Activated CD4-positive, alpha-beta memory T cell treated with anti-CD3 and anti-CD28 coated beads, Interleukin-2, amount 10 ng/mL, durations not matched to agents 7 days and 5 days (primary cell): ENCODE measurements at regions of chr5 and their contacts with region 1.

Region 1: DNA sequence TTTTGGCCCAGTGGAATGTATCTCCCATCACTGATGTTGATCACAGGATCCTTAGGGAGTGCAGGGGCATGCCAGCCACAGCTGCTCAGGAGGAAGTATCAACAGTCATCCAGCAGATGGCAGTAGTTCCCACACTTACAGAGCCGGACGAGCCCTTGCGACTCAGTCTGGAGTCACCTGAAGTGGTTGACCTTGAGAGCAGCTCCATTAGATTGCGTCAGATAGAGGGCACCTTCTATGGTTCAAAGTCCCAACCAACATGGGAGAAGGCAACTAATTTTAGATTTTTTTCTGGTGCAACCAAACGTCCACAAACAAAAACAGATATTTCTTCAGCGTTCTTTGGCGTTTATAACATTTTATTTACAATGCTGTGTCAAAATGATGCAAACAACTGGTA is 124.5 kb downstream of the EGFLAM start:
- DNase-seq: peak; percentile 52
- H3K4me3 Mint-ChIP-seq: no peak overlapping the region
- H3K27ac Mint-ChIP-seq: no peak overlapping the region
- H3K4me1 Mint-ChIP-seq: no peaks in the 10 kb centered on the region
- H3K27me3 Mint-ChIP-seq: peaks cover 20% of the 10 kb centered on the region

Region 2: DNA sequence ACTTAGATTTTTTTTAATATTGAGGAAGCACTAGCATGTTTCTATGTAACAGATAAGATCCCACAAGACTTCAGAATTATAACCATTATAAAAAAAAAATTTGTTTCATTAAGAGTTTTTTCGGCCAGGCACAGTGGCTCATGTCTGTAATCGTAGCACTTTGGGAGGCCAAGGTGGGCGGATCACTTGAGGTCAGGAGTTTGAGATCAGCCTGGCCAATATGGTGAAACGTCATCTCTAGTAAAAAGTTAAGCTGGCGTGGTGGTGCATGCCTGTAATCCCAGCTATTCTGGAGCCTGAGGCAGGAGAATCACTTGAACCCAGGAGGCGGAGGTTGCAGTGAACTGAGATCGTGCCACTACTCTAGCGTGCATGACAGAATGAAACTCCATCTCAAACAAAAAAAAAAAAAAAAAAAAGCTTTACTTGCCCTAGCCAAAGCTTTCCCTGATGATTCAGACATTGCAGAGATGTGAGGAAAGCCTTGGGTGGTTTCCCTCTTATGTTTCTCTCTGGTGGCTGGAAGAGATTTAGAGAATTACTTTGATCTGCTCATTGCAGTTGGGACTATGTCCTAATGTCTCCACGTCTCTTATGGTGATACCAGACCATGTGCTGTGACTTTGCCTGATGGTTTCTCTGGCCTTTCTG is 59.1 kb before region 1 on chr5:
- CTCF ChIA-PET with region 1: no interaction called
- POLR2A ChIA-PET with region 1: no interaction called
- DNase-seq: no peak
- H3K4me3 Mint-ChIP-seq: no peak overlapping the region
- H3K27ac Mint-ChIP-seq: no peak overlapping the region
- H3K4me1 Mint-ChIP-seq: no peaks in the 10 kb centered on the region
- H3K27me3 Mint-ChIP-seq: peaks cover 2% of the 10 kb centered on the region

Region 3: GRCh38 chr5:38364825-38365224 is 18.1 kb before region 1 on chr5:
- CTCF ChIA-PET with region 1: interaction called, 10 read pairs
- POLR2A ChIA-PET with region 1: no interaction called
- DNase-seq: no peak
- H3K4me3 Mint-ChIP-seq: no peak overlapping the region
- H3K27ac Mint-ChIP-seq: no peak overlapping the region
- H3K4me1 Mint-ChIP-seq: peaks cover 4% of the 10 kb centered on the region
- H3K27me3 Mint-ChIP-seq: peaks cover 3% of the 10 kb centered on the region

Region 4: DNA sequence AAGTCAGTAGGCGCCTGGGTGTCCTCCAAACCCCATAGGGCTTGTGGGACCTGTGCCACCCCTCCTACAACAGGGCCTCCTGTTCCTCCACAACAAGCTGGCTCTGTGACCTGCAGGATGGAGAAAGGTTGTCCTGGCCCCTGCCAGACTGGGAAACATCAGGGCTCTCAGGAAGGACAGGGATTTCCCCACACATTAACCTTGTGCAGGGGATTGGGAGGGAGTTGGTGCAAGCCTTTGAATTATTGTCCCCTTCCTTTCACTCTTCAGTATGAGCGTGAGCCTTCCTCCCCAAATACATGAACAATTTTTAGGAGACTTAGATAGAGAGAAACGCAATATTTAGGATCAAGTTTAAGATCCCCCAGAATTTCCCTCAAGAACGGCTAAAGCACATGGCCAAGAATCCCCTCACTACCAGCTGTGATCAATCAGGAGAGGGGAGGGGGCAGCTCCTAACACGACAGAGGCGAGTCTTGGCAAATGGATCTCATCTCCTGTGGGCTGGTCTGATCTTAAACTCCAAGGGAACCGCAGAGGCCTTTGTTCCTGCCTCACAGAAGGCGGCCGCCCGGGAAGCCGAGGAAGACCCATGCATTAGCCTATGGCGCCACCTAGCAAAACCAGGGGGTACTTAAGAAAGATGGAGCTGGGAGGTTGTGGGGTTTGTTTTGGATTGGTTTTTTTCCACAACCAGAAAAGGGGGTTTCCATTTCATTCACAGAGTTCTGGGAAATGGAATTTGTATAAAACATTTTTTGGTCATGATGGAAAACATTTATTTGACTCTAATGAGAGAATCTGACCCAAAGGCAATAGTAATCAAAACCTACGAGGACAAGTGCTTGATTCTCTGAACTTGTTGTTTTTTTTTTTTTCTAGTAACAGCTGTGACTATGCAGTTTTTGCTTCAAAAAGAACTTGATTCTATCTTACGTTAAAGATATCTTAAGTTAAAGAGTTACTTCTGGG is 426.8 kb after region 1 on chr5:
- CTCF ChIA-PET with region 1: interaction called, 21 read pairs
- POLR2A ChIA-PET with region 1: no interaction called
- DNase-seq: peak; percentile 67
- H3K4me3 Mint-ChIP-seq: no peak overlapping the region
- H3K27ac Mint-ChIP-seq: no peak overlapping the region
- H3K4me1 Mint-ChIP-seq: peaks cover 15% of the 10 kb centered on the region
- H3K27me3 Mint-ChIP-seq: peaks cover 13% of the 10 kb centered on the region